ENCODE measurements at regions of chr1 and their contacts with region 1.

Region 1: GRCh38 chr1:116418091-116418830 is 45.2 kb downstream of the ATP1A1 start:
- DNase-seq: peak; percentile 70
- H3K4me3 Mint-ChIP-seq: peak overlapping the region; percentile 85
- H3K27ac Mint-ChIP-seq: peak overlapping the region; percentile 50
- H3K4me1 Mint-ChIP-seq: peaks cover 6% of the 10 kb centered on the region
- H3K27me3 Mint-ChIP-seq: no peaks in the 10 kb centered on the region
- CTCF ChIP-seq: no peak

Region 2: GRCh38 chr1:116288201-116288761 is 130.0 kb before region 1 on chr1:
- CTCF ChIA-PET with region 1: no interaction called
- POLR2A ChIA-PET with region 1: no interaction called
- intact Hi-C with region 1: no loop called
- DNase-seq: no peak
- H3K4me3 Mint-ChIP-seq: no peak overlapping the region
- H3K27ac Mint-ChIP-seq: peak overlapping the region; percentile 55
- H3K4me1 Mint-ChIP-seq: peaks cover 59% of the 10 kb centered on the region
- H3K27me3 Mint-ChIP-seq: no peaks in the 10 kb centered on the region
- CTCF ChIP-seq: no peak

Region 3: DNA sequence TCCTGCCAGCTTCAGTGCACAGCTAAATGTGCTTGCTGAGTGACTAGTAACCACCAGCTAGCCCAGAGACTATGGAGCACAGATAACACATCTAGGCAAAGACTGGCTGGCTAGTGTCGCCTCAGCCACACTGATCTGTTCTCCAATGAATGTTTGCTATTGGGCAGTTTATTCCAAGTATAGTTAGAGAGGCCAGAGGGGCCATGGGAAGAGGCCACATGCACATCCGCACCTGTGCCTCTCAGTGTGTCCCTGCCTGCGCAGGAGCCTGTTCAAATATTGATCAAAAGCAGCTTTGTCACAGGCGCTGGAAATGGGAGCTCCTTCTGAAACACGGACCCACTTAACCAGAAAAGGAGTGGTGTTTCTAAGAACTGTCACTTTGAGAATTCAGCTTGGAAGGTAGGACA is 96.5 kb before region 1 on chr1:
- CTCF ChIA-PET with region 1: no interaction called
- POLR2A ChIA-PET with region 1: no interaction called
- intact Hi-C with region 1: no loop called
- DNase-seq: no peak
- H3K4me3 Mint-ChIP-seq: no peak overlapping the region
- H3K27ac Mint-ChIP-seq: no peak overlapping the region
- H3K4me1 Mint-ChIP-seq: peaks cover 12% of the 10 kb centered on the region
- H3K27me3 Mint-ChIP-seq: no peaks in the 10 kb centered on the region
- CTCF ChIP-seq: no peak

Region 4: GRCh38 chr1:116405241-116406135 is 12.8 kb before region 1 on chr1:
- CTCF ChIA-PET with region 1: interaction called, 3 read pairs
- POLR2A ChIA-PET with region 1: interaction called, 13 read pairs
- intact Hi-C with region 1: no loop called
- DNase-seq: no peak
- H3K4me3 Mint-ChIP-seq: no peak overlapping the region
- H3K27ac Mint-ChIP-seq: no peak overlapping the region
- H3K4me1 Mint-ChIP-seq: peaks cover 24% of the 10 kb centered on the region
- H3K27me3 Mint-ChIP-seq: no peaks in the 10 kb centered on the region
- CTCF ChIP-seq: no peak

Region 5: DNA sequence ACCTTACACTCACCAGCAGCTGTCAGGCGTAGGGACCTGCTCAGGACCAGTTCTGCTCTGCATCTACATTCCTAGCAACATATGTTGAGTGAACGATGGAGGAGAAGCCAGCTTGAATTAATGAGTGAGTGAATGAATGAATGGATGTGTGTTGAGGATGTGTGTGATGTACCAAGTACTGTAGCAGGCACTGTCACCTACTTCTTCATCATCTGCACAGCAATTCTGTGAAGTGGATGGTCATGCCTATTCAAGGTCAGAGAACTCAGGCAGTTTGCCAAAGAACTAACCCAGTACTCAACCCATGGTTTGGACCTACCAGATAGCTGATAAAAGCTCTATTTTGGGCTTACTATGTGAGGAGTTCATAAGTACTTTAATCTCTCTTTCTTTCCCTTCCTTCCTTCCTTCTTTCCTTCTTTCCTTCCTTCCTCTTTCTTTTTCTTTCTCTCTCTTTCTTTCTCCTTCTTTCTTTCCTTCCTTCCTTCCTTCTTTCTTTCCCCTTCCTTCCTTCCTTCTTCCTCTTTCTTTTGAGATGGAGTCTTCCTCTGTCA is 11.6 kb after region 1 on chr1:
- CTCF ChIA-PET with region 1: interaction called, 4 read pairs
- POLR2A ChIA-PET with region 1: interaction called, 12 read pairs
- intact Hi-C with region 1: no loop called
- DNase-seq: no peak
- H3K4me3 Mint-ChIP-seq: no peak overlapping the region
- H3K27ac Mint-ChIP-seq: no peak overlapping the region
- H3K4me1 Mint-ChIP-seq: no peaks in the 10 kb centered on the region
- H3K27me3 Mint-ChIP-seq: peaks cover 1% of the 10 kb centered on the region
- CTCF ChIP-seq: no peak